ENCODE measurements at regions of chr10 and their contacts with region 1.

Region 1: GRCh38 chr10:52488606-52489485 is 174.8 kb downstream of the DKK1 start:
- DNase-seq: peak in 1 of 2 experiments; percentile 69
- H3K4me3 ChIP-seq: no peak overlapping the region
- H3K4me3 Mint-ChIP-seq: no peak overlapping the region
- H3K27ac Mint-ChIP-seq: peak overlapping the region; percentile 45
- H3K4me1 ChIP-seq: peaks cover 27% of the 10 kb centered on the region
- H3K4me1 Mint-ChIP-seq: peaks cover 28% of the 10 kb centered on the region
- H3K27me3 ChIP-seq: no peaks in the 10 kb centered on the region
- H3K27me3 Mint-ChIP-seq: no peaks in the 10 kb centered on the region
- CTCF ChIP-seq: peak; percentile 80 to 90

Region 2: DNA sequence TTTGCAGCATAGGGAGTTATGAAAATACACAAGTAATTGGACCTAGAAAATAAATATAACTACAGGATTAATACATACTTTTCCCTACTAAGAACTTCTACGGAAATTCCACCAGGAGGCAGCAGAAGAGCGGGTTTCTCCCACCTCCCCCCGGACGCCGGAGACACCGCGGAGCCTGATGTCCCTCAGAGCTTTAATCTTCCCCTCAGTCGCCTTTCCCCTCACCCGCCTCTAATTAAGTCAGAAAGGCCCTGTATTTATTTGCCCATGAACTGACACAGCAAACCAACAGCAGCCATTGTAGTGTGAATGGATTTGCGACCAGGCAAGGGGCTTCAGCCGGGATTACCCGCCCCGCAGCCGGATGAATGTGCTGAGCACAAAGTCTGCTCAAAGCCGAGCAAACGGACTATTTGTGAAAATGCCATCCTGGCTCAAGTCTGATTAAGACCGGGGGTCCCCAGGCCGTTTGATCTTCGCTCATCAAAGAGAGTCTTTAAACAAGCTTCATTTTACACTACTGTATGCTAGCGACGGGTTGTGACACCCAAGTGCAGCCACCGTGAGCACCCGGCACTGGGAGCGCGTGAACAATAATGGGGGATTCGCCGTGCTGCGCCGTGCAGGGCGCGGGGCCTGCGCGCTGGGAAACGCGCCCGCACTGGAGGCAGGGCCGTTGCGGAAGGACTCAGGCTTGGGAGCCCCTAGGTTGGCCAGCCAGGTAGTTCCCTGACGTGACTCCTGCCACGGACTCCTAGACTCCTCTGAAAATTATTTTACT is 180.4 kb before region 1 on chr10:
- CTCF ChIA-PET with region 1: interaction called, 68 read pairs
- POLR2A ChIA-PET with region 1: no interaction called
- intact Hi-C with region 1: loop called (anchors 1 kb)
- DNase-seq: peak; percentile 87 to 91
- H3K4me3 ChIP-seq: peak overlapping the region; percentile 88
- H3K4me3 Mint-ChIP-seq: peak overlapping the region; percentile 90
- H3K27ac Mint-ChIP-seq: peak overlapping the region; percentile 35
- H3K4me1 ChIP-seq: peaks cover 28% of the 10 kb centered on the region
- H3K4me1 Mint-ChIP-seq: peaks cover 31% of the 10 kb centered on the region
- H3K27me3 ChIP-seq: no peaks in the 10 kb centered on the region
- H3K27me3 Mint-ChIP-seq: no peaks in the 10 kb centered on the region
- CTCF ChIP-seq: peak; percentile 89 to 98

Region 3: DNA sequence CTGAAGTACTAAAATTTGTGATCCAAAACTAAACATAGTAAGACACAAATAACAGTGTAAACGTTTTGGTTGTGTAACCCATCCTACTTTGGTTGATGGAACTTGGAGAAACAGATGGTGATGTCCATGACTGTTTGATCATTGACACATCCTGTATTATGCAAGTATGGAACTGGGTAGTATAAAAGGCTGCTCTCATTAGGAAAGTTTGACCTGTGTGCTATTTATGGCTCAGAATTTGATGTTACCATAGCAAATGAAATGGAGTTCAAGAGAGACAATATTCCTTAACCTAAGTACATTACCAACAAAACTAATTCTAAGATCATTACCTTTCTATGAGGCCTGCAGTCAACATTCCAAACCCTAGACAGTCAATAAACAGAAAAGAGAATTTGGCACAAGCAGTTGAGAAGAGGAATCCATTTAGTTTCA is 134.9 kb before region 1 on chr10:
- CTCF ChIA-PET with region 1: interaction called, 3 read pairs
- POLR2A ChIA-PET with region 1: no interaction called
- intact Hi-C with region 1: loop called (anchors 1 kb)
- DNase-seq: peak in 1 of 2 experiments; percentile 80
- H3K4me3 ChIP-seq: no peak overlapping the region
- H3K4me3 Mint-ChIP-seq: no peak overlapping the region
- H3K27ac Mint-ChIP-seq: peak overlapping the region; percentile 86
- H3K4me1 ChIP-seq: peaks cover 61% of the 10 kb centered on the region
- H3K4me1 Mint-ChIP-seq: peaks cover 66% of the 10 kb centered on the region
- H3K27me3 ChIP-seq: no peaks in the 10 kb centered on the region
- H3K27me3 Mint-ChIP-seq: no peaks in the 10 kb centered on the region
- CTCF ChIP-seq: no peak

Region 4: GRCh38 chr10:52379287-52379686 is 109.6 kb before region 1 on chr10:
- CTCF ChIA-PET with region 1: no interaction called
- POLR2A ChIA-PET with region 1: interaction called, 4 read pairs
- intact Hi-C with region 1: loop called (anchors 1 kb)
- DNase-seq: no peak
- H3K4me3 ChIP-seq: no peak overlapping the region
- H3K4me3 Mint-ChIP-seq: peak overlapping the region; percentile 54
- H3K27ac Mint-ChIP-seq: peak overlapping the region; percentile 80
- H3K4me1 ChIP-seq: peaks cover 69% of the 10 kb centered on the region
- H3K4me1 Mint-ChIP-seq: peaks cover 47% of the 10 kb centered on the region
- H3K27me3 ChIP-seq: no peaks in the 10 kb centered on the region
- H3K27me3 Mint-ChIP-seq: no peaks in the 10 kb centered on the region
- CTCF ChIP-seq: no peak

Region 5: DNA sequence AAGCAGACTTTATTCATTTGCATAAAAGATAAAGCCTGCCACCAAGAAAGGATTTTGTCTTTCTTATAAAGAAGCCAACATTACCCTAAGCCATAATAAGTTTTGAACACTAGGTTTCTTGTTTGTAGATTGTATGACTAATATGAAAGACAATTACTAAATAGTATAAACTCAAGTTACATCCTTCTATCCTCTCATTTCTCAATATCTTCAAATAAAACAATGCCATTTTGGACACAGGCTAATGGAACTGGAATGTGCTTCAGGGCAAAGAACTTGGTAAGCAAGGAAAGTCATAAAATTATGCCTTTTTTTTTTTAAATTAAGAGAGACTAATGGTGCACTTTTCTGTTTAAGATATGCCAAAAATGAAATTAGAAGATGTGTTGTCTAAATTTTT is 37.0 kb before region 1 on chr10:
- CTCF ChIA-PET with region 1: interaction called, 4 read pairs
- POLR2A ChIA-PET with region 1: no interaction called
- intact Hi-C with region 1: loop called (anchors 1 kb)
- DNase-seq: no peak
- H3K4me3 ChIP-seq: no peak overlapping the region
- H3K4me3 Mint-ChIP-seq: no peak overlapping the region
- H3K27ac Mint-ChIP-seq: no peak overlapping the region
- H3K4me1 ChIP-seq: peaks cover 48% of the 10 kb centered on the region
- H3K4me1 Mint-ChIP-seq: peaks cover 25% of the 10 kb centered on the region
- H3K27me3 ChIP-seq: no peaks in the 10 kb centered on the region
- H3K27me3 Mint-ChIP-seq: no peaks in the 10 kb centered on the region
- CTCF ChIP-seq: peak in 1 of 2 experiments; percentile 2

Region 6: DNA sequence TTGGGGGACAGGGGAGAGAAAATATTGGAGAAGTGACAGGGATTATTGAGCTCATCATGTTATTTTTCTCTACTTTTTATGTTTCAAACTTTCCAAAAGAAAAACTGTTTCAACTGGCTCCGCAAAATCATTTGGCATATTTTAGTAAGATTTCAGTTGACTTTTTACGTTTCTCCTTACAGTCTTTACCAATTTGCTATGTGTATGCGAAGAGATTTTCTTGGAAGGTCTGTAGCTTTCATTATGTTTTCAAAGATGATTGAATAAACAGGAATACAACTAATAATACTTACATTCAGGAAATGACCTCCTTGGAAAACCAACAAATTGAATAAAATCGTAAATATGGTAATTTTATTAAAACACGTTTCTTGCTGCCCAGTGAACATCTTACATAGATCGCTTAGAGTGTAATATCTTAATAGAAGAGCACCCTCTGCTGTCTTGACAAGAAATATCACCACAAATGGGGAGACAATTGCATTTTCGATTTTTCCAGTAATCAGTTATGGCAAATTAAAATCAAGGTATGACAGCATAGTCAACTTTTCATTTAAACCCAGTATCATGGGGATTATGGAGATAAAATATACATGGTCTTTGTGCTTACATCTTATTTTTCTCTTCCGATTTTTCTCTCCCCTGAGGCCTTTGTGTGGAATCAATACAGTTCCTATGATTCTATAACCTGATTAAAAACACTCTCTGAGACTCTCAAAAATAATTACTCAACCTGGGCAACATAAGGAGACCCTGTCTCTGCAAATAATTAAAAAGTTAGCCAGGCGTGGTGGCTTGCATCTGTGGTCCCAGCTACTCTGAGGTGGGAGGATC is 240.6 kb after region 1 on chr10:
- CTCF ChIA-PET with region 1: no interaction called
- POLR2A ChIA-PET with region 1: no interaction called
- intact Hi-C with region 1: loop called (anchors 5 kb)
- DNase-seq: peak in 1 of 2 experiments; percentile 49
- H3K4me3 ChIP-seq: no peak overlapping the region
- H3K4me3 Mint-ChIP-seq: no peak overlapping the region
- H3K27ac Mint-ChIP-seq: no peak overlapping the region
- H3K4me1 ChIP-seq: peaks cover 8% of the 10 kb centered on the region; the same call in 1 of the 2 replicates
- H3K4me1 Mint-ChIP-seq: no peaks in the 10 kb centered on the region
- H3K27me3 ChIP-seq: no peaks in the 10 kb centered on the region
- H3K27me3 Mint-ChIP-seq: peaks cover 3% of the 10 kb centered on the region
- CTCF ChIP-seq: peak; percentile 73 to 89